Activated T-helper 2 cell treated with anti-CD3 and anti-CD28 coated beads, Interferon-gamma antibody, Interleukin-2, Interleukin-4, amounts not matched to agents 10 μg/mL and 5 μg/mL and 100 μg/mL, durations not matched to agents 14 hours and 24 hours and 36 hours (primary cell): ENCODE measurements at regions of chr17 and their contacts with region 1.

Region 1: GRCh38 chr17:19513897-19514488 is 19.7 kb upstream of the SLC47A1 start:
- DNase-seq: peak; percentile 47
- H3K4me3 Mint-ChIP-seq: no peak overlapping the region
- H3K27ac Mint-ChIP-seq: no peak overlapping the region
- H3K4me1 Mint-ChIP-seq: peaks cover 5% of the 10 kb centered on the region
- H3K27me3 Mint-ChIP-seq: peaks cover 13% of the 10 kb centered on the region

Region 2: GRCh38 chr17:19766422-19767270 is 252.7 kb after region 1 on chr17:
- intact Hi-C with region 1: loop called (anchors 1 kb)
- DNase-seq: peak; percentile 61
- H3K4me3 Mint-ChIP-seq: no peak overlapping the region
- H3K27ac Mint-ChIP-seq: no peak overlapping the region
- H3K4me1 Mint-ChIP-seq: peaks cover 8% of the 10 kb centered on the region
- H3K27me3 Mint-ChIP-seq: no peaks in the 10 kb centered on the region

Region 3: GRCh38 chr17:20223808-20224332 is 709.9 kb after region 1 on chr17:
- intact Hi-C with region 1: no loop called
- DNase-seq: no peak
- H3K4me3 Mint-ChIP-seq: no peak overlapping the region
- H3K27ac Mint-ChIP-seq: no peak overlapping the region
- H3K4me1 Mint-ChIP-seq: peaks cover 19% of the 10 kb centered on the region
- H3K27me3 Mint-ChIP-seq: peaks cover 12% of the 10 kb centered on the region

Region 4: GRCh38 chr17:20852239-20852989 is 1338.4 kb after region 1 on chr17:
- intact Hi-C with region 1: no loop called
- DNase-seq: no peak
- H3K4me3 Mint-ChIP-seq: peak overlapping the region; percentile 73
- H3K27ac Mint-ChIP-seq: no peak overlapping the region
- H3K4me1 Mint-ChIP-seq: peaks cover 10% of the 10 kb centered on the region
- H3K27me3 Mint-ChIP-seq: peaks cover 26% of the 10 kb centered on the region